GM10248 (cell line): ENCODE measurements at regions of chr1 and their contacts with region 1.

Region 1: DNA sequence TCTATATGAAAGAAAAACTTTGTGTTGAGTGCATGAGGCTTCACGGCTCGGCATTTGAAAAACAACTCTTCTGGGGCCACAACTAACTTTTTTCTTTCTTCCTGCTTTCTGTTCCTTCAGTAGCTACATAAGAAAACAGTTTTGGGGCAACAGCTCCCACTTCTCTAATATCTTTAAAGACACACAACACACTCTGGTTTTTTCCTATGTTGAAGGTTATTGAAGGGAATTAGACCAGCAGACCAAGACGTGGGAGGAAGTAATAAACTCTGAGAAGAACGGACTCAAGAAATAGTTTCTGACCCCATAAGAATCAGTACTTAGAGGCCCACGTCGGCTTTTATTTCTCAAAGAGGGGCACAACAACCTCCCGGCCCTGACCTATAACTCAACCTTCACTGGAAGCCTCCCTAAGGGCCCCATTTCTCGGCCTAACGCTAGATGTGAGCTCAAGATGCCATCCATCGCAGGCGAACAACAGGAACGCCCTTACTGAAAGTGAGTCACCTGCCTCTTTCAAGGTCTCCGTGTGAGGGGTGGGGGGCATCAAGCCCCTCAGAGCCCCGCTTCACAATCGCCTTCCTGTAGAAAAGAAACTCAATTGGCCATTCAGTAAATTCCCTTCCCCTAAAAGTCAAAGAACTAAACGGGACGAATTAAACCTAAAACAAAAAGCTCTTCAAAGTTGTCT is 844 bp downstream of the ZMYM6 start:
- DNase-seq: peak; percentile 32
- CTCF ChIP-seq: no peak

Region 2: DNA sequence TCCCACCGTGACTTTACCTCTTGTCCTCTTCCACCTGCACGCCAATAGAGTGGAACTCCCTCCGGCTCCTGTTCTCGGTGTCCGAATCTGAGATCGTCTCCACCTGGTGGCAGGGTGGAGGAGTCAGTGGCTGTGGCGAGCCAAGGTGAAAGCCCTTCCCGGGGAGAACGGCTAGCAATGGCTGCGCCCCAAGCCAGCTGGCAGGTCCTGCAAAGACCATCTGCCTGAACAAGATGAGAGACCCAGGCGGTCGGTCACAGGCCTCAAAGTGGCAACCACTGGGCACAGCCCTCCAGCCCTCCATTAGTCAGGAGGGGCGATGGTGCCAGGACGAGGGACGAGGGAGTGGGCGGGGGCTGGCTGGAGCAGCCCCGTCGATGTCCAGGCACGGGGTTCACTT is 145.9 kb before region 1 on chr1:
- CTCF ChIA-PET with region 1: no interaction called
- POLR2A ChIA-PET with region 1: no interaction called
- DNase-seq: no peak
- CTCF ChIP-seq: no peak

Region 3: DNA sequence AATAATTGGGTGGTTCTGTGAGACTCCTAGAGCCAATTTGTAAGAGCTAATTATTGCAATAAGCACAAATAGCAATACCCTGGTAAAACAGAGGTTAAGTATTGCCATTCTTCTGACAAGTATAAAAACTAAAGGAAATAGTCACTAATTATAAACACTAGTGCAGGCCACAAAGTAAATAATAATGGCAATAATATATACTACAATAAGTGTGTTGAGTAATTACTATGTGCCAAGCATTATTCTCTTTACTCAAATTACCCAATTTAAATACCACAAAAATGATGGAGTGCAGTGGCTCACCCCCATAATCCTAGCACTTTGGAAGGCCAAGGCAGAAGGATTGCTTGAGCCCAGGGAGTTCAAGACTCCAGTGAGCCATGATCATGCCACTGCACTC is 14.5 kb before region 1 on chr1:
- CTCF ChIA-PET with region 1: interaction called, 12 read pairs
- POLR2A ChIA-PET with region 1: no interaction called
- DNase-seq: no peak
- CTCF ChIP-seq: no peak

Region 4: GRCh38 chr1:35497571-35497970 is 466.7 kb after region 1 on chr1:
- CTCF ChIA-PET with region 1: no interaction called
- POLR2A ChIA-PET with region 1: no interaction called
- DNase-seq: no peak
- CTCF ChIP-seq: no peak